ENCODE measurements at regions of chr1 and their contacts with region 1.

Region 1: GRCh38 chr1:65048335-65048734 is 82.0 kb upstream of the JAK1 start:
- H3K4me3 Mint-ChIP-seq: no peak overlapping the region
- H3K27ac Mint-ChIP-seq: no peak overlapping the region
- H3K4me1 Mint-ChIP-seq: no peaks in the 10 kb centered on the region
- H3K27me3 Mint-ChIP-seq: no peaks in the 10 kb centered on the region

Region 2: DNA sequence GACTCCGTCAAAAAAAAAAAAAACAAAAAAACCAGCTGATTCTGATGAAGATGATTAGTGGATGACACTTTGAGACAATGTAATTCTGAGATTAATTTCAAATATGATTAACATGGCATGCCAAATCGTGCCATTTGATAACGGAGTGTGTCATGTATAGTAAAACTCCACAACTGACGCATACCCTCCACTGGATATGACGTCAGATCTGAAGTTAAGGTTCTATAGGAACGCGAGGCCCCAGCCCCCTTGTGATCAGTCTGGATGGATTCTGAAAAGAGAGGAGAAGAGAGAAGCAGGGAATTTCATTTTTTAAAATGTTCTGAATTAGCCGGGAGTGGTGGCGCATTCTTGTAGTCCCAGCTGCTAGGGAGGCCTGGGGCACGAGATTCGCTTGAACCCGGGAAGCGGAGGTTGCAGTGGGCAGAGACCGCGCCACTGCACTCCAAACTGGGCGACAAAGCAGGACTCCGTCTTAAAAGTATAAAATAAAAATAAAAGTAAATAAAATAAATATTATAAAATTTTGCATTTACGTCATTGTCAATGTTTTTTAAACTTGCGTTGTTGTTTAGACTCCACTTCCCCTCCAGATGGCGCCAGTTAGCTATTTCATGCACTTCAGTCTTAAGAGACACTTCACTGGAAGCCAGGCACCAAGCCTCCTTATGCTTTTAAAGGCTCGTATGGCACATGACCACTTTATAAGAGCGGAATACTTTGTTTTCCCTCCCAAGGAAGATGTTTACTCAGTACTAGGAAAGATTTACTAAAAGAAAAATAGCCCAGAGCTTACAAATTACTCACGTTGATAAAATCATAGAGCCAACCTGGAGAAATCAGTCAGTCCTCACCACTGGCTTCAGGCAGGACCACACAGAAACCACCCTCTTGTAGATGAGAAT is 779.4 kb before region 1 on chr1:
- intact Hi-C with region 1: loop called (anchors 10 kb)
- H3K4me3 Mint-ChIP-seq: no peak overlapping the region
- H3K27ac Mint-ChIP-seq: no peak overlapping the region
- H3K4me1 Mint-ChIP-seq: no peaks in the 10 kb centered on the region
- H3K27me3 Mint-ChIP-seq: no peaks in the 10 kb centered on the region

Region 3: GRCh38 chr1:64864018-64864940 is 184.1 kb before region 1 on chr1:
- intact Hi-C with region 1: loop called (anchors 5 kb)
- H3K4me3 Mint-ChIP-seq: peak overlapping the region; percentile 45
- H3K27ac Mint-ChIP-seq: peak overlapping the region; percentile 82
- H3K4me1 Mint-ChIP-seq: peaks cover 65% of the 10 kb centered on the region
- H3K27me3 Mint-ChIP-seq: no peaks in the 10 kb centered on the region

Region 4: DNA sequence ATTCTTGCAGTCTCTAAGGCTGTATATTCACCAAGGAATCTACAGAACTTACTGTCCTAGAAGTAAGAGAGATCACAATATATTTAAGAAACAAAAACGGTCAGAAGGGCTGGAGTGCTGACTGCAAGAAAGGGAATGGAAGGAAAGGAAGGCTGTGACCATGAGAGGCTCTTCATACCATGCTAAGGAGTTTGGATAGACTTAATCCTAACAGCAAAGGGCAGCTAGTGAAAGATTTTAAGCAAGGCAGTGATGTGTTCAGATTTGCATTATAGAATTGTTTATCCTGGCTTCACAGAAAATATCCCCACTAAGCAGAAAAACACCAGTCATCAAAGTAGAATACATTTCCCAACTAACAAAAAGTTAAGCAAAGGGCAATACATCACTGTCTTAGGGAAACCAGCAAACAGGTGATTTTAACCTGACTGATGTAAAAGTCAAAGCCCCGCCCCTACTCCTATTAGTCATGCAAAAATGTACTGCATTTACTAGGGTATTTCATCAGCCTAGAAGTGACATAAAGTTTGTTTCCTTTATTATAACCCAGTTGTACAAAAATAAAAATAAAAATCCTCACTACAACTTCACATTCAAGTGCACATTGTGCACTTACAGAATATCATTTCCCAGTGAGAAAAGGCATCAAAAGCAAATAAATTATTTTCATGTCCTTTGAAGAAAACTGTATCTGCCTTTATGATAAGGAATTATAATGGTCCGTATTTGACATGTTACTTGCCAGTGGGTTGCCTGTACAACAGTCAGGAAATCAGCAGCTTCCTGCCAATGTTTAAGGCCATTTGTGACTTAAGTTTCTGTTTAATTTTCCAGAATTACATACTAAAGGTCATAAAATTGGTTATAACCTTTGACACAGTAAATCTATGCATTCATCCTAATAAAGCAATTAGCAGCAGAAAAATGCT is 99.2 kb before region 1 on chr1:
- intact Hi-C with region 1: no loop called
- H3K4me3 Mint-ChIP-seq: no peak overlapping the region
- H3K27ac Mint-ChIP-seq: no peak overlapping the region
- H3K4me1 Mint-ChIP-seq: peaks cover 60% of the 10 kb centered on the region
- H3K27me3 Mint-ChIP-seq: no peaks in the 10 kb centered on the region

Region 5: GRCh38 chr1:64966158-64966971 is 82.0 kb before region 1 on chr1 and contains the start of gene JAK1:
- intact Hi-C with region 1: loop called (anchors 5 kb)
- H3K4me3 Mint-ChIP-seq: peak within 1 kb of the TSS; percentile 88
- H3K27ac Mint-ChIP-seq: peak within 1 kb of the TSS; percentile 90
- H3K4me1 Mint-ChIP-seq: peaks cover 54% of the 10 kb centered on the region
- H3K27me3 Mint-ChIP-seq: peaks cover 12% of the 10 kb centered on the region

Region 6: DNA sequence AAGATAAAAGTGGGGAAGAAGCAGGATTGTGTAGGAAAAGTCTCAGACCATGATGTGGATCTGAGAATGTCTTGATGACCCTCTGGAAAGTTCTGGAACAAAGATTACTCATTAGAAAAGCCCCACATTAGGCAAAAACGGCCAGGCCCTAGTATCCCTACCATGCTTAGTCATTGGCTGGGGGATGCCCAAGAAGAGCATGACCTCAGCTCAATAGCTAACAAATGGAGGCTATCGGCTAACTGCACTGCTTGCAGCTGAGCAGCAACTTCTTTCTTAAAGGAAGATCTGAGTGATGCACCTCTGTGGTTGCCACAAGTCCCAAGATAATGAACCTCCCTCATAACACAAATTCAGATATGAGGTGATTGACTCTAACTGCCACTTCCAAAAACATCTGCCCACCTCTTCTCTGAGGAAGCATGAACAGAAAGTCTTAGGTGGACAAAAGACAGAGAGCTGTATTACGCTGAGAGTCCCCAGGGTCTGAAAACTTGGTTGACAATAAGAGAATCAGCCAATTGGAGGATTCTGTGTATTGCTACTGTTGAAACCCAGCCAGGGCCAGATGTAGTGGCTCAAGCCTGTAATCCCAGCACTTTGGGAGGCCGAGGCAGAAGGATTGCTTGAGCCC is 35.0 kb after region 1 on chr1:
- intact Hi-C with region 1: no loop called
- H3K4me3 Mint-ChIP-seq: no peak overlapping the region
- H3K27ac Mint-ChIP-seq: no peak overlapping the region
- H3K4me1 Mint-ChIP-seq: peaks cover 33% of the 10 kb centered on the region
- H3K27me3 Mint-ChIP-seq: no peaks in the 10 kb centered on the region